CD4-positive, alpha-beta T cell (primary cell): ENCODE measurements at regions of chr15 and their contacts with region 1.

Region 1: GRCh38 chr15:79724312-79724711 is 172.5 kb downstream of the MTHFS start:
- DNase-seq: no peak
- ATAC-seq: no peak
- H3K4me3 ChIP-seq: no peak overlapping the region
- H3K4me3 Mint-ChIP-seq: no peak overlapping the region
- H3K27ac ChIP-seq: no peak overlapping the region
- H3K27ac Mint-ChIP-seq: no peak overlapping the region
- H3K4me1 ChIP-seq: no peaks in the 10 kb centered on the region
- H3K4me1 Mint-ChIP-seq: no peaks in the 10 kb centered on the region
- H3K27me3 ChIP-seq: no peaks in the 10 kb centered on the region
- H3K27me3 Mint-ChIP-seq: peaks cover 37% of the 10 kb centered on the region
- CTCF ChIP-seq: no peak

Region 2: DNA sequence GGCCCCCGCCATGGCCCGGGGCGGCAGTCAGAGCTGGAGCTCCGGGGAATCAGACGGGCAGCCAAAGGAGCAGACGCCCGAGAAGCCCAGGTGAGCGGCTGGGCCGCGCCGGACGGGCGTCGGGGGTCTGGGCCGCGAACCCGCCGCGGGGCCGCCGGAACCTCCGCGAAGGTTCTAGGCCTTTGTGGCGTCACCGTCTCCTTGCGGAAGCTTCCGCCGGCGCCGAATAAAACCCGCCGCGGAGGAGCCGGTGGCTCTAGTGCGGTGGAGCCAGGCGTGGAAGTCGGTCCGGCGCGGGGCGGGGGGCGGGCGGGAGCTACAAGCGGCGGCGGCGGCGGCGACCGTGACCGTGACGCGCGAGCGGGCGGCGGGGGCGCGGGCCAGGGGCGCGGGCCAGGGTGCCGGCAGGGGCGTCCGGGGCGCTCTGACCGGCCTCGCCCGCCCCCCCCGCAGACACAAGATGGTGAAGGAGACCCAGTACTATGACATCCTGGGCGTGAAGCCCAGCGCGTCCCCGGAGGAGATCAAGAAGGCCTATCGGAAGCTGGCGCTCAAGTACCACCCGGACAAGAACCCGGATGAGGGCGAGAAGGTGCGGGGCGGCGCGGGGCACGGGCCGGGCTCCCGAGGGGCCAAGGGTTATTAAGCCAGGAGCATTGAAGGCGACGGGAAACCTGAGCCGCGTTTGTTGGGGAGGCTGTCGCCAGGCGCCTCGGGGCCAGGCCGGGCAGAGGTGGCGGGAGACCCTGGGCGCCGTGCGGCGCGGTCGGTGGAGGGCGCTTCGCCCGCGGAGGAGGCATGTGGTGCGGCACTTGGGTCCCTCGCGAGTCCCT is 1459.8 kb before region 1 on chr15 and contains the start of gene DNAJA4:
- CTCF ChIA-PET with region 1: no interaction called
- POLR2A ChIA-PET with region 1: no interaction called
- intact Hi-C with region 1: no loop called
- DNase-seq: peak; percentile 39 to 86 (median 61)
- ATAC-seq: peak; percentile 77
- H3K4me3 ChIP-seq: peak within 1 kb of the TSS; percentile 70
- H3K4me3 Mint-ChIP-seq: peak within 1 kb of the TSS; percentile 89
- H3K27ac ChIP-seq: peak within 1 kb of the TSS; percentile 54 to 62
- H3K27ac Mint-ChIP-seq: peak within 1 kb of the TSS; percentile 94
- H3K4me1 ChIP-seq: peaks cover 27% of the 10 kb centered on the region
- H3K4me1 Mint-ChIP-seq: peaks cover 36% of the 10 kb centered on the region
- H3K27me3 ChIP-seq: no peaks in the 10 kb centered on the region
- H3K27me3 Mint-ChIP-seq: no peaks in the 10 kb centered on the region
- CTCF ChIP-seq: peak; percentile 27
- total RNA-seq, gene DNAJA4: 47.0 to 48.5 TPM

Region 3: DNA sequence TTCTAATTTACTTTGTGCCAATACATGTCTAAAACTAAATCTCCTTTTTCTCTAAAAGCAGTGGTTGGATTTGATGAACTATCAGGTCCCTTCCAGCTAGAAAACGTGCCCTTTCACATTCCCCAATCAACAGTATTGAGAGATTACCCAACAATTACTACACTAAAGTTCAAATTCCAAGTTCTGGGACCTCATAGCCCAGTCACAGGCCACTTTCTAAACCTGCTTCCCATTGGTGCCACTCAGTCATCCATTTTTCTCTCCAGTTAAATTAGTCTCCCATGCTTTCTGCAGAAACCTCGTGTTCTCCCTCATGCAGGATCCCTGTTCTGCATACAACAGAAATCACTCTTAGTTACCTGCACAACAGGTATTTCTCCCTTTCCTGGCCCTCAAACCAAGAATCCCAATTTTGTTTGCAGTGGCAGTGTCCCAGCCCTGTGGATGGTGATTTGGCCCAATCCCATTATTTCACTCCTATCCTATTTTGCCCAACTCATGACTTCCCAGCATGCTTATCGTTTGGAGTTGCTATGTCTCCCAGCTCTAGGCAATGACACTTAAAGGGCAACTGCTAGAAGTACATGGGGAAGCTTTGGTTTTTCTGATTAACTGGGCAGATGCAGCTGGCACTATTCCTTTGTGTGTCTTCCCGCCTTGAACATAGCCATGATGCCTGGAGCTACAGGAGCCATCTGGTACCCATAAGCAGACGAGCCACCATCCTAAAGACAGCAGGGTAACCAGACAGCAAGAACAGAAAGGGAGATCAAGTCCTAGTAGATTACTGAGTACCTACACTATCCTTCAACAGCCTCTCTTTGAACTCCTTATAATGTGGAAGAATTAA is 67.9 kb before region 1 on chr15:
- CTCF ChIA-PET with region 1: no interaction called
- POLR2A ChIA-PET with region 1: no interaction called
- intact Hi-C with region 1: no loop called
- DNase-seq: no peak
- ATAC-seq: no peak
- H3K4me3 ChIP-seq: no peak overlapping the region
- H3K4me3 Mint-ChIP-seq: no peak overlapping the region
- H3K27ac ChIP-seq: no peak overlapping the region
- H3K27ac Mint-ChIP-seq: no peak overlapping the region
- H3K4me1 ChIP-seq: no peaks in the 10 kb centered on the region
- H3K4me1 Mint-ChIP-seq: no peaks in the 10 kb centered on the region
- H3K27me3 ChIP-seq: peaks cover 12 to 13% of the 10 kb centered on the region in 2 experiments
- H3K27me3 Mint-ChIP-seq: peaks cover 62% of the 10 kb centered on the region
- CTCF ChIP-seq: no peak

Region 4: DNA sequence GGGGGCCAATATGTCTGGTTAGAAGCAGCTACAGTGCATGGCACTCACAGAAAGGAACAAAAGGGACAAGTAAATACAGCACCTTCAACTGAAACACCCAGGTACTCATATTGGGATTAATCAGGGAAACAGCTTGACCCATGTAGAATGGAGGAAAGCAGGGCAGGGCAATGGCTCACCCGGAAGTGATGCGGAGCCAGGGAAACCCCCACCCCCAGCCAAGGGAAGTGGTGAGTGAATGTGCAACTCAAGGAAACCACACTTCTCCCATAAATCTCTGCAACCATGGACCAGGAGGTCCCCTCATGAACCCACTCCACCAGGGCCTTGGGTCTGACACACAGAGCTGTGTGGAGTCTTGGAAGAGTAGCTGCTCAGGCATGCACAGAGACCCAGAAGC is 55.4 kb after region 1 on chr15:
- CTCF ChIA-PET with region 1: no interaction called
- POLR2A ChIA-PET with region 1: no interaction called
- intact Hi-C with region 1: loop called in 1 of 2 experiments (anchors 10 kb)
- DNase-seq: peak in 3 of 14 experiments; percentile 13 to 37 (median 29)
- ATAC-seq: no peak
- H3K4me3 ChIP-seq: no peak overlapping the region
- H3K4me3 Mint-ChIP-seq: no peak overlapping the region
- H3K27ac ChIP-seq: no peak overlapping the region
- H3K27ac Mint-ChIP-seq: no peak overlapping the region
- H3K4me1 ChIP-seq: peaks cover 7% of the 10 kb centered on the region
- H3K4me1 Mint-ChIP-seq: no peaks in the 10 kb centered on the region
- H3K27me3 ChIP-seq: peaks cover 3 to 5% of the 10 kb centered on the region in 2 experiments
- H3K27me3 Mint-ChIP-seq: peaks cover 20% of the 10 kb centered on the region
- CTCF ChIP-seq: no peak